Activated CD8-positive, alpha-beta T cell treated with anti-CD3 and anti-CD28 coated beads for 36 hours (primary cell): ENCODE measurements at regions of chr20 and their contacts with region 1.

Region 1: GRCh38 chr20:5222919-5223634 is 93.7 kb downstream of the PROKR2 start:
- DNase-seq: peak; percentile 74
- ATAC-seq: peak; percentile 79
- H3K4me3 Mint-ChIP-seq: no peak overlapping the region
- H3K27ac Mint-ChIP-seq: no peak overlapping the region
- H3K4me1 Mint-ChIP-seq: no peaks in the 10 kb centered on the region
- H3K27me3 Mint-ChIP-seq: no peaks in the 10 kb centered on the region
- CTCF ChIP-seq: peak; percentile 87

Region 2: GRCh38 chr20:5126512-5127203 is 96.4 kb before region 1 on chr20 and contains the start of gene CDS2:
- CTCF ChIA-PET with region 1: interaction called, 11 read pairs
- POLR2A ChIA-PET with region 1: no interaction called
- intact Hi-C with region 1: no loop called
- DNase-seq: peak; percentile 100
- ATAC-seq: peak; percentile 86
- H3K4me3 Mint-ChIP-seq: peak within 1 kb of the TSS; percentile 88
- H3K27ac Mint-ChIP-seq: peak within 1 kb of the TSS; percentile 97
- H3K4me1 Mint-ChIP-seq: peaks cover 36% of the 10 kb centered on the region
- H3K27me3 Mint-ChIP-seq: no peaks in the 10 kb centered on the region
- CTCF ChIP-seq: peak; percentile 51
- total RNA-seq, gene CDS2: 30.2 to 34.7 TPM

Region 3: GRCh38 chr20:5205348-5206210 is 17.5 kb before region 1 on chr20:
- CTCF ChIA-PET with region 1: interaction called, 165 read pairs
- POLR2A ChIA-PET with region 1: no interaction called
- intact Hi-C with region 1: no loop called
- DNase-seq: peak; percentile 81
- ATAC-seq: peak; percentile 99
- H3K4me3 Mint-ChIP-seq: no peak overlapping the region
- H3K27ac Mint-ChIP-seq: no peak overlapping the region
- H3K4me1 Mint-ChIP-seq: no peaks in the 10 kb centered on the region
- H3K27me3 Mint-ChIP-seq: no peaks in the 10 kb centered on the region
- CTCF ChIP-seq: peak; percentile 95

Region 4: DNA sequence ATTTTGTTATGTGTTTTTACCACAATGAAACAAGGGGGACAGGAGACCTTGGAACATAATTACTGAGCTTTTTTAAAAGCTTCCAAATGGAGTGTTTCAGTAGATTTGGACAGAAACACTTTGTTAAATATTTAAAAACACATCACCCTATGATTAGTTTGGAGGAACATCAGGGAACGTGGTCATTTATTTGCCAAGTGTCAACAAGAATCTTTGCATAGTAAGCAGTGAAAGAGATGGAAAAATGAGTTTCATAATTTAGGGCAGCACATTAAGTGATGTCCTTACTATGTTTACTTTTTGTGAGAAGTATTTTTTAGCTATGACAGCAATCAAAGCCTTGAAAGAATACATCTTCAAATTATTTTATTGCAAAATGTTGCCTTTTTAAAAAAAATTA is 11.1 kb after region 1 on chr20:
- CTCF ChIA-PET with region 1: interaction called, 23 read pairs
- POLR2A ChIA-PET with region 1: no interaction called
- intact Hi-C with region 1: no loop called
- DNase-seq: no peak
- ATAC-seq: no peak
- H3K4me3 Mint-ChIP-seq: no peak overlapping the region
- H3K27ac Mint-ChIP-seq: no peak overlapping the region
- H3K4me1 Mint-ChIP-seq: no peaks in the 10 kb centered on the region
- H3K27me3 Mint-ChIP-seq: peaks cover 30% of the 10 kb centered on the region
- CTCF ChIP-seq: no peak

Region 5: GRCh38 chr20:5327356-5327755 is 104.3 kb after region 1 on chr20:
- CTCF ChIA-PET with region 1: no interaction called
- POLR2A ChIA-PET with region 1: no interaction called
- intact Hi-C with region 1: no loop called
- DNase-seq: no peak
- ATAC-seq: no peak
- H3K4me3 Mint-ChIP-seq: no peak overlapping the region
- H3K27ac Mint-ChIP-seq: no peak overlapping the region
- H3K4me1 Mint-ChIP-seq: no peaks in the 10 kb centered on the region
- H3K27me3 Mint-ChIP-seq: peaks cover 17% of the 10 kb centered on the region
- CTCF ChIP-seq: no peak